Lower leg skin (tissue), 4 donors: ENCODE measurements at regions of chr10 and their contacts with region 1.

Region 1: GRCh38 chr10:103859161-103860086 is 4.0 kb upstream of the SH3PXD2A start:
- DNase-seq: peak in 1 of 2 donors; percentile 66
- H3K4me3 ChIP-seq: no peak overlapping the region
- CTCF ChIP-seq: peak in 1 of 3 donors; percentile 43
- POLR2A ChIP-seq: no peak

Region 2: DNA sequence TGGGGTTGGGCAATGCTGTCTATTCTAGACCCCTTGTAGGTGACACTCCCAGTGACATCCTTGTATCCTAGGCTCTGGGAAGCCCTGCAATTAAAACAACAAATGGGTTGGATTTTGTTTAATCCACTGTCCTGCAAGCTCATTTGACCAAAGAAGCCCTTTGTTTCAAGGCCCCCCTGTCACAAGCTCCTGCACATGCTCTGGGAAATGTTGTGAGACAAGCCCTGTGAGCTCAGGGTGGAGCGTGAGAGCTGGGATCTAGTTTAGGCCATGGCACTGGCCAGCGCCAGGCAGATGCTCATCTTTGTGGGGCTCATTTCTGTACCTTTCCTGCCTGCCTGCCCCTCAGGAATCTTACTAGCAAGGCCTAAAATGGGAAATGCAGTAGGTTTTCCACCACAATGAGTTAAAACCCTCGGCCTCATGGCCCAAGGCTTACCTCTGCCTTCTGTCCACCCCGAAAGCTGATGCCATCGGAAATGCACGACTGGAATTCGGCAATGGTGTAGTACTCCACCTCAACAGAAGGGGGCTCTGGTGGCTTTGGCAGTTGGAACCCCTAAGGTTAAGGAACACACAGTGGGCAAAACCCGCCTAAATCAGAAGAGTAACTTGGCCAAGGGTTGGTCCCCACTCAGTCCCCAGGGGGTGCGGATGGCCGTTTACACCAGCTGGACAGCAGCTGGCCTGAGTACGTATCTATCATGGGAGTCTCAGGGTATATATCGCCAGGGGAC is 253.9 kb before region 1 on chr10:
- intact Hi-C with region 1: loop called (anchors 10 kb)
- DNase-seq: peak in 1 of 2 donors; percentile 43
- H3K4me3 ChIP-seq: no peak overlapping the region
- CTCF ChIP-seq: peak in 1 of 3 donors; percentile 46
- POLR2A ChIP-seq: no peak

Region 3: GRCh38 chr10:103712570-103713498 is 146.6 kb before region 1 on chr10:
- intact Hi-C with region 1: loop called (anchors 2 kb)
- DNase-seq: peak; percentile 87 to 97
- H3K4me3 ChIP-seq: no peak overlapping the region
- CTCF ChIP-seq: peak in 1 of 3 donors; percentile 92
- POLR2A ChIP-seq: no peak

Region 4: DNA sequence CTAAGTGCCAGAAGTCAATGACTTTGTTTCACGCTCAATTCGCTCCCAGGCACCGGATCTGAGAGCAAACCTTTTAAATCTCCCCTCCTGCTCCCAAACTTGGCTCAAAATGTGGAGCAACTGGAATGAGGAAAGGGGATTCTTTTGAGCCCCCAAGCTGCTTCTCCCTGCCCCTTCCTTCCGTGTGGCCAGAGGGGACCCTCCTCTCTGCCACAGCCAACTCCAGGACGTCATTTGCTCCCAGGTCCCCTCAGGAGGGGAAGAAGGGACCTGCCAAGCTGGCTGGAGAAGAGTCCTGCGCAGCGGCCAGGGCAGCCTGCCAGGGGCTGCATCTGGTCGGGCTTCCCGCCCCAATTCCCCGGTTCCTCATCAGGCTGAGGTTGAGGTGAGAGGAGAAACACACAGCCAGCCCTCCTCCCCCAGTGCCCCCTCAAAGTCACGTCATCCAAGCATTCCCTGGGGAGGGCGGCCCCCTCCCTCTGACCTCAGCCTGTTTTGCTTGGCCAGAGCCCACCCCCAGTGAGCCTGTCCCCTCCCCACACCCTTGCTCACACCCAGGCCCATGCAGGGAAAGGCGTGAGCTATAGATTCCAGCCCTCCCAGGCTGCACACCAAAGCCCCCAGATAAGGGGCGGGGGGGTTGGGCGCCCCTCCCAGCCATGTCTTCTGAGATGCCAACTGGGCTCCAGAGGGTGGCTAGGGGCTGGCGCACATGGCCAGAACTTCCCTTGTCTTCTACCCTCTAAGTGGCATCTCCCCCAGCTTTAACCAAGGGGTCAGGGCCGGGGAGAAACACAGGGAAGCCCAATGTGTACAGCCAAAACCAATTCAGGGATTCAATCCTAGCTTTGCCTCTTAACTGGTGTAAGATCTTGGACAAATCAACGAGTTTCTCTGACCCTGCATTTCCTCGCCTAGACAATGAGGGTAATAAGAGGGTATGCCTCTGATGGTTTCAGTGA is 39.0 kb before region 1 on chr10:
- intact Hi-C with region 1: no loop called
- DNase-seq: peak in 1 of 2 donors; percentile 93
- H3K4me3 ChIP-seq: no peak overlapping the region
- CTCF ChIP-seq: no peak
- POLR2A ChIP-seq: no peak

Region 5: DNA sequence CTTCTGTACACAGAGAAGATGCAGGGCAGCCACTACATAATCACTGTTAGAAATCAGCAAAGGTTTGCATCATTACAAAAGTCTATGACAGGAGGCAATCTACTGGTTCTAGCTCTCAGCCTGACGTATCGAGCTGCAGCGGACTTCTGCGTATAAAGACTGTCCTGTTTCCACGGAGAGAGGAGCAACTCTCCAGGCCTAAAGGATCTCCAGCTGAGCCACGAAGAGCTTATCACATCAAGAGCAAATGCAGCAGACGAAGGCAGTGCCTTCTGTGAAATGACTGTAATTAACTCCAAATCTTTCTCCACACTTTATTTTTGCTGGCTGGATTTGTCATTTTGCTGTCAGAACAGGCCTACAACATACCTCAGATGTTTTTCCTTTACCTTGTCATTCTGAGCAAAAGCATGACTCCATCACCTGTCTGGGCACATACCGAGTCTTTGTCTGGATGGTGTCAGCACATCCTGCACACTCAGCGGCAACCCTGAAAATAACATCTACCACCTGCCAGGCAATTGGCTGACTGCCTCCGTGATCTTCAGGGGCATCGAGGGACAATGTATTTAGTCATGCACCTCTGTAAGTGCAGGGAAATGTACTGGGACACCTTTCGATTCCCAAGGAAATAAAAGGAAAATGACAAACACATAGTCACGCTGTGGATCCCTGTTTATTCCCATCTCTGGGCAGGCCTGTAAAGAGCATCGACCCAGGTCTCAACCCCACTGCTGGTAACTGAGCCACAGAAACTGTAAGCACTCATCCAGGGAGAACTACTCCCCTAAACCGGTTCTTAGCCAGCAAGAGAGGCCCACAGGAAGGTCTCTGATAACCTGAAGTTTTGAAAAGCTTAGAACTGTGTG is 22.2 kb after region 1 on chr10:
- intact Hi-C with region 1: loop called (anchors 1 kb)
- DNase-seq: peak; percentile 68 to 69
- H3K4me3 ChIP-seq: no peak overlapping the region
- CTCF ChIP-seq: no peak
- POLR2A ChIP-seq: no peak